ENCODE measurements at regions of chrX and their contacts with region 1.

Region 1: GRCh38 chrX:104195489-104196084 is 29.3 kb downstream of the FAM199X start:
- DNase-seq: no peak
- ATAC-seq: no peak
- H3K4me3 ChIP-seq: no peak overlapping the region
- H3K27ac ChIP-seq: no peak overlapping the region
- H3K4me1 ChIP-seq: no peaks in the 10 kb centered on the region
- H3K27me3 ChIP-seq: no peaks in the 10 kb centered on the region

Region 2: GRCh38 chrX:104270920-104271512 is 75.4 kb after region 1 on chrX:
- intact Hi-C with region 1: loop called in 1 of 2 experiments (anchors 5 kb)
- DNase-seq: peak in 1 of 2 donors; percentile 58
- ATAC-seq: no peak
- H3K4me3 ChIP-seq: no peak overlapping the region
- H3K27ac ChIP-seq: no peak overlapping the region
- H3K4me1 ChIP-seq: no peaks in the 10 kb centered on the region
- H3K27me3 ChIP-seq: no peaks in the 10 kb centered on the region

Region 3: DNA sequence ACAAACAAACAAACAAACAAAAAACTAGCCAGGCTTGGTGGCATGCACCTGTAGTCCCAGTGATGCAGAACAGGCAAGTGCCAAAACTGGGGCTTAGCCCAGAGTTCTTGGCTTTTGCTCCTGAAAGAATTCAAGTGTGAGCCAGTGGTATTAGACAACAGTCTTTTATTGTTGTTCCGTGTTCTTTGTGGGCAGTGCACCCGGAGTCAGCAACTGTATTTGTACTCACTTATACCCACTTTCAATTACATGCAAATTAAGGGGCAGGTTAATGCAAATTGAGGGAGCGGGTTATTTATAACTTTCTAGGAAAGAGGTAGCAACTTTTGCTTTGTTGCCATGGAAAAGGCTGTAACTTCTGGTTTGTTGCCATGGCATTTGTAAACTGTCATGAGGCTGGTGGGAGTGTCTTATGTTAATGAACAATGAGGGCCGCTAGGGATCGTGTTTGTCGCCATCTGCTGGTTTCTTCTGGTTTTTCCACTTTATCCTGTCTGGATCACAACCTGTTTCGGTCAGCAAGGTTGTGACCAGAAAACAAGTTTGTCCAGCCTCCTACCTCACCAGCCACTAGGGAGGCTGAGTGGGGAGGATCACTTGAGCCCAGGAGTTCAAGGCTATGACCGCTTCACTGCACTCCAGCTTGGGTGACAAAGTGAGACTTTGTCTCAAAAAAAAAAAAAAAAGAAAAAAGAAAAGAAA is 148.0 kb after region 1 on chrX:
- intact Hi-C with region 1: loop called in 1 of 2 experiments (anchors 5 kb)
- DNase-seq: no peak
- ATAC-seq: no peak
- H3K4me3 ChIP-seq: no peak overlapping the region
- H3K27ac ChIP-seq: no peak overlapping the region
- H3K4me1 ChIP-seq: no peaks in the 10 kb centered on the region
- H3K27me3 ChIP-seq: no peaks in the 10 kb centered on the region

Region 4: DNA sequence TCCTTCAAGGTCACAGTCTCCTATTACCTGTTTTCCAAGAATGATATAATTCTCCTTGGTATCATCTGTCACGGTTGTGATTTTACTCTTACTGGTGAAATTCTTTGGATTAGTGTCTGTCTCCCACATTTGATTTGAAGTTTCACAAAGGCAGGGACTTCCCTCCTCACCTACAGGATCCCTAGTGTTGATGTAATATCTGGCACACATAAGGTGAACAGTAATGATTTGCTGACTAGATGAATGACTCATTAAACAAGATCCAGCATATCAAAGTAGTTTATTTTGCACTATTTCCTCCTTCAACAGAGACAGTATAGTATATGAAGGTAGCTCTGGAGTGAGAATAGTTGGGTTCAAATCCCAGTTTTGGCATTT is 235.1 kb after region 1 on chrX:
- intact Hi-C with region 1: no loop called
- DNase-seq: no peak
- ATAC-seq: no peak
- H3K4me3 ChIP-seq: no peak overlapping the region
- H3K27ac ChIP-seq: no peak overlapping the region
- H3K4me1 ChIP-seq: no peaks in the 10 kb centered on the region
- H3K27me3 ChIP-seq: no peaks in the 10 kb centered on the region

Measured in aorta (tissue), 5 donors.